CD4-positive, alpha-beta memory T cell (primary cell): ENCODE measurements at regions of chr7 and their contacts with region 1.

Region 1: GRCh38 chr7:2477447-2478398 is 1.5 kb upstream of the GRIFIN start:
- DNase-seq: peak; percentile 54 to 69 (median 64)
- H3K4me3 ChIP-seq: no peak overlapping the region
- H3K4me3 Mint-ChIP-seq: peak overlapping the region in 2 of 8 donors; percentile 22 to 31
- H3K27ac ChIP-seq: no peak overlapping the region
- H3K27ac Mint-ChIP-seq: no peak overlapping the region
- H3K4me1 ChIP-seq: peaks cover 13% of the 10 kb centered on the region
- H3K4me1 Mint-ChIP-seq: peaks cover 0 to 4% (median 0%) of the 10 kb centered on the region in 4 donors
- H3K27me3 ChIP-seq: no peaks in the 10 kb centered on the region
- H3K27me3 Mint-ChIP-seq: no peaks in the 10 kb centered on the region

Region 2: GRCh38 chr7:2519119-2519930 is 41.6 kb after region 1 on chr7 and contains the start of gene LFNG:
- CTCF ChIA-PET with region 1: no interaction called
- POLR2A ChIA-PET with region 1: interaction called, 8 read pairs
- intact Hi-C with region 1: loop called (anchors 5 kb)
- DNase-seq: peak; percentile 77 to 86 (median 81)
- H3K4me3 ChIP-seq: peak within 1 kb of the TSS; percentile 93 to 98
- H3K4me3 Mint-ChIP-seq: peak within 1 kb of the TSS; percentile 97 to 99 (median 98)
- H3K27ac ChIP-seq: peak within 1 kb of the TSS; percentile 80
- H3K27ac Mint-ChIP-seq: peak within 1 kb of the TSS; percentile 89 to 99 (median 92)
- H3K4me1 ChIP-seq: peaks cover 37% of the 10 kb centered on the region
- H3K4me1 Mint-ChIP-seq: peaks cover 14 to 45% (median 25%) of the 10 kb centered on the region in 4 donors
- H3K27me3 ChIP-seq: no peaks in the 10 kb centered on the region
- H3K27me3 Mint-ChIP-seq: no peaks in the 10 kb centered on the region
- total RNA-seq, gene LFNG: 125 to 127 TPM

Region 3: DNA sequence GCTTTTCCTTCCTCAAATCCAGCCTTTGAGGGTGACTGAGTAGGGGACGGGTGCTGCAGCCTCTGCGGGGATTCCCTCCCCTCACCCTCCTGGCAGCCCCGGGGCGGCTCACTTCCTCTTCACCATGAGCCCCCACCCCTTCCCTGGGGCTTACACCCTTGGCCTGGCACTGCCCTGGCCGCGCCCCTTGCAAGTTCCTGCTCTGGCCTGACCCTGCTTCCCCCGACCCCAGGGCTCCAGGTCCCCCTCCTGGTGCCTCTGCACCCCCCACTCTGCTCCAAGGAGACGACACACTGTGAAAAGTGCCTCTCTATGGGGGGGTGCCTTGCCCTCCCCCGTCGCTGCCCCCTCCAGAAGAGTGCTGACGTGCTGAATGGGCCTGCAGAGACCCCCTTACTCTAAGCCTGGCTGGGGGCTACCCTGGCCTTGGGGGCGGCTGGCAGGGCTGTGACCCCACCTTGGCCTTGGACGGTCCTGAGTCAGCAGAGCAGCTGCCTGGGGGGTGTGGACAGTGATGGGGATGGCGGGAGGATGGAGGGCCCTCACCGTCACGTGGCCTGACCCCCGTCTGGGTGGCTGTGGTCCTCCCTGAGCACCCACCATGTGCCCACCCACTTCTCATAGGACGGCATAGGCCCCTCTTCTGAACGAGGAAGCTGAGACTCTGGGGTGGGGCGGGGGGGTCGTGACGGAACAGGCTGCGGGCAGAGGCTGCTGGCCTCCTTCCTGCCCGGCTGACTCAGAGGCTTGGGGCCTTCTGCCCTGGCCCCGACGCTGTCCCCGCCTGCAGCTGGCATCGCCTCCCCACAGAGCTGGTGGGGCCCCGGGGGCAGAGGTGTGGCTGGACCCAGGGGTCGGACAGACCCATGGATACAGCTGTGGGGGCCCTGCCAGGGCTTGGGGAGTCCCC is 51.7 kb after region 1 on chr7:
- CTCF ChIA-PET with region 1: no interaction called
- POLR2A ChIA-PET with region 1: interaction called, 10 read pairs
- intact Hi-C with region 1: loop called (anchors 5 kb)
- DNase-seq: peak; percentile 41 to 84 (median 54)
- H3K4me3 ChIP-seq: peak overlapping the region in 1 of 2 donors; percentile 50
- H3K4me3 Mint-ChIP-seq: peak overlapping the region; percentile 71 to 91 (median 80)
- H3K27ac ChIP-seq: peak overlapping the region; percentile 83
- H3K27ac Mint-ChIP-seq: peak overlapping the region; percentile 84 to 99 (median 93)
- H3K4me1 ChIP-seq: peaks cover 69% of the 10 kb centered on the region
- H3K4me1 Mint-ChIP-seq: peaks cover 19 to 65% (median 48%) of the 10 kb centered on the region in 4 donors
- H3K27me3 ChIP-seq: no peaks in the 10 kb centered on the region
- H3K27me3 Mint-ChIP-seq: no peaks in the 10 kb centered on the region

Region 4: GRCh38 chr7:2680792-2681490 is 203.2 kb after region 1 on chr7:
- CTCF ChIA-PET with region 1: interaction called, 3 read pairs
- POLR2A ChIA-PET with region 1: no interaction called
- intact Hi-C with region 1: loop called (anchors 1 kb)
- DNase-seq: peak in 4 of 5 donors; percentile 22 to 33 (median 30)
- H3K4me3 ChIP-seq: no peak overlapping the region
- H3K4me3 Mint-ChIP-seq: no peak overlapping the region
- H3K27ac ChIP-seq: no peak overlapping the region
- H3K27ac Mint-ChIP-seq: no peak overlapping the region
- H3K4me1 ChIP-seq: no peaks in the 10 kb centered on the region
- H3K4me1 Mint-ChIP-seq: no peaks in the 10 kb centered on the region
- H3K27me3 ChIP-seq: no peaks in the 10 kb centered on the region
- H3K27me3 Mint-ChIP-seq: peaks cover 4 to 7% of the 10 kb centered on the region in 2 donors